CD4-positive, alpha-beta T cell (primary cell): ENCODE measurements at regions of chr20 and their contacts with region 1.

Region 1: GRCh38 chr20:37295001-37295400 is 5.5 kb downstream of the MANBAL start:
- DNase-seq: peak in 2 of 14 experiments; percentile 34 to 54
- ATAC-seq: no peak
- H3K4me3 ChIP-seq: no peak overlapping the region
- H3K4me3 Mint-ChIP-seq: no peak overlapping the region
- H3K27ac ChIP-seq: no peak overlapping the region
- H3K27ac Mint-ChIP-seq: no peak overlapping the region
- H3K4me1 ChIP-seq: peaks cover 20% of the 10 kb centered on the region
- H3K4me1 Mint-ChIP-seq: peaks cover 61% of the 10 kb centered on the region
- H3K27me3 ChIP-seq: no peaks in the 10 kb centered on the region
- H3K27me3 Mint-ChIP-seq: no peaks in the 10 kb centered on the region
- CTCF ChIP-seq: no peak

Region 2: DNA sequence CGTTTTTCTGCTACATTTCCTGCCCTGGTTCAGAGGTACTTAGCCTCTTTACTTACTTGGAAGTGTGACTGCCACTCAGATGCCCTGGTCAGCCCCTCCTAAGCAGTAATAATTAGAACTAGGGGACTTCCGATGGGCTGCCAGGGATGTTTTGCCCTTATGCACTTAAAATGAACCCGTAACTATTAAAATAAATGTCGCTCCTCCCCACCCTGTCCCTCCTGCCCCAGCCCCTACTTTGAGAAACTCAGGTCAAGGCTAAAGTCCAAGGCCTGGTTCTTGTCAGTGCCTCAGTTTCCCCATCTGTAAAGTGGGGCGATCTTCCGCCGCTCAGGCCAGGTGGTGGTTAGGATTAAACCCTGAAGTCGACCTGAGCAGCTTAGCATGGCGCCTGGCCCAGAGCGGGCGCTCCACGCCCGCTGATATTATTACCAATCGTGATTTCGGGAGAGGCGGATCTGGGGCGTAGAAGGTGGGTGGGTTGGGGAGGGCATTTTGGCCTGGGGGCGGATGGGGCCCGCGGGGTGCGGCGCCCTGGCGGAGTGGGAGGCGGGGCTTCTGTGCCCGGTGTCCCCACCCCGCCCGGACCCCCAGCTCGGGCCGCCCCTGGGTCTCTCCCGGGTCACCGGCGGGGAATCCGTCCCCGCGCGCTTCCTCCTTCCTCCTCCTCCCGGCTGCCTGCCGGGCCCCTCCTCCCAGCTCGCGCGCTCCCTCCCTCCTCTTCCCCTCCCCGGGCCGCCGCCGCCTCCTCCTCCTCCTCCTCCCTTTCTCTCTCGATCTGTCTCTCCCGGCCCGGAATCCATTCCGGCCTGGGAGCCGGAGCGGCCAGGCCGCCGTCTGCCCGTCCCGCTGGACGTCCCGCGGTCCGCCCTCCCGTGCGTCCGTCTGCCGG is 50.6 kb after region 1 on chr20 and contains the start of gene SRC:
- CTCF ChIA-PET with region 1: no interaction called
- POLR2A ChIA-PET with region 1: no interaction called
- intact Hi-C with region 1: loop called in 1 of 2 experiments (anchors 5 kb)
- DNase-seq: peak in 13 of 14 experiments; percentile 14 to 72 (median 46)
- ATAC-seq: peak; percentile 70
- H3K4me3 ChIP-seq: peak within 1 kb of the TSS; percentile 57
- H3K4me3 Mint-ChIP-seq: peak within 1 kb of the TSS; percentile 86
- H3K27ac ChIP-seq: no peak within 1 kb of the TSS
- H3K27ac Mint-ChIP-seq: peak within 1 kb of the TSS; percentile 17
- H3K4me1 ChIP-seq: peaks cover 12% of the 10 kb centered on the region
- H3K4me1 Mint-ChIP-seq: peaks cover 21% of the 10 kb centered on the region
- H3K27me3 ChIP-seq: no peaks in the 10 kb centered on the region
- H3K27me3 Mint-ChIP-seq: no peaks in the 10 kb centered on the region
- CTCF ChIP-seq: no peak
- total RNA-seq, gene SRC: 2.5 to 3.1 TPM

Region 3: GRCh38 chr20:38033310-38034107 is 738.5 kb after region 1 on chr20 and contains the starts of genes RPRD1B and TTI1:
- CTCF ChIA-PET with region 1: no interaction called
- POLR2A ChIA-PET with region 1: no interaction called
- intact Hi-C with region 1: loop called in 1 of 2 experiments (anchors 5 kb)
- DNase-seq: peak; percentile 74 to 94 (median 84)
- ATAC-seq: peak; percentile 84
- H3K4me3 ChIP-seq: peak within 1 kb of the TSS; percentile 79
- H3K4me3 Mint-ChIP-seq: peak within 1 kb of the TSS; percentile 99
- H3K27ac ChIP-seq: peak within 1 kb of the TSS; percentile 92 to 98
- H3K27ac Mint-ChIP-seq: peak within 1 kb of the TSS; percentile 100
- H3K4me1 ChIP-seq: peaks cover 38% of the 10 kb centered on the region
- H3K4me1 Mint-ChIP-seq: peaks cover 85% of the 10 kb centered on the region
- H3K27me3 ChIP-seq: no peaks in the 10 kb centered on the region
- H3K27me3 Mint-ChIP-seq: no peaks in the 10 kb centered on the region
- CTCF ChIP-seq: no peak
- total RNA-seq, gene RPRD1B: 54.8 to 55.7 TPM
- total RNA-seq, gene TTI1: 10.6 to 11.4 TPM